Activated CD4-positive, alpha-beta memory T cell treated with anti-CD3 and anti-CD28 coated beads for 36 hours (primary cell): ENCODE measurements at regions of chr6 and their contacts with region 1.

Region 1: GRCh38 chr6:28161410-28162079 is 19.9 kb downstream of the ZKSCAN8 start:
- DNase-seq: peak; percentile 89
- H3K4me3 Mint-ChIP-seq: peak overlapping the region; percentile 61
- H3K27ac Mint-ChIP-seq: peak overlapping the region; percentile 42
- H3K4me1 Mint-ChIP-seq: peaks cover 14% of the 10 kb centered on the region
- H3K27me3 Mint-ChIP-seq: no peaks in the 10 kb centered on the region

Region 2: GRCh38 chr6:27518881-27519795 is 642.4 kb before region 1 on chr6:
- CTCF ChIA-PET with region 1: no interaction called
- POLR2A ChIA-PET with region 1: no interaction called
- intact Hi-C with region 1: no loop called
- DNase-seq: peak; percentile 70
- H3K4me3 Mint-ChIP-seq: peak overlapping the region; percentile 79
- H3K27ac Mint-ChIP-seq: peak overlapping the region; percentile 77
- H3K4me1 Mint-ChIP-seq: peaks cover 19% of the 10 kb centered on the region
- H3K27me3 Mint-ChIP-seq: peaks cover 17% of the 10 kb centered on the region

Region 3: DNA sequence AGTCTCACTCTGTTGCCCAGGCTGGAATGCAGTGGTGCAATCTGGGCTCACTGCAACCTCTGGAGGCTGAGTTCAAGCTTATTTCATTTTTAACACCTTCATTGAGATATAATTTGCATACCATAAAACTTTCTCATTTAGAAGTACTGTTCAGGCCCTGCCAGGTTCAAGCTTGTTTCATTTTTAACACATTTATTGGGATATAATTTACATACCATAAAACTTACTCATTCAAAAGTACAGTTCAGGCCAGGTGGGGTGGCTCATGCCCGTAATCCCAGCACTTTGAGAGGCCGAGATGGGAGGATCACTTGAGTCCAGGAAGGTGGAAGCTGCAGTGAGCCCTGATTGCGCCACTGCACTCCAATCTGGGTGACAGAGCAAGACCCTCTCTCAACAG is 199.0 kb before region 1 on chr6:
- CTCF ChIA-PET with region 1: no interaction called
- POLR2A ChIA-PET with region 1: no interaction called
- intact Hi-C with region 1: no loop called
- DNase-seq: no peak
- H3K4me3 Mint-ChIP-seq: no peak overlapping the region
- H3K27ac Mint-ChIP-seq: no peak overlapping the region
- H3K4me1 Mint-ChIP-seq: no peaks in the 10 kb centered on the region
- H3K27me3 Mint-ChIP-seq: peaks cover 36% of the 10 kb centered on the region

Region 4: DNA sequence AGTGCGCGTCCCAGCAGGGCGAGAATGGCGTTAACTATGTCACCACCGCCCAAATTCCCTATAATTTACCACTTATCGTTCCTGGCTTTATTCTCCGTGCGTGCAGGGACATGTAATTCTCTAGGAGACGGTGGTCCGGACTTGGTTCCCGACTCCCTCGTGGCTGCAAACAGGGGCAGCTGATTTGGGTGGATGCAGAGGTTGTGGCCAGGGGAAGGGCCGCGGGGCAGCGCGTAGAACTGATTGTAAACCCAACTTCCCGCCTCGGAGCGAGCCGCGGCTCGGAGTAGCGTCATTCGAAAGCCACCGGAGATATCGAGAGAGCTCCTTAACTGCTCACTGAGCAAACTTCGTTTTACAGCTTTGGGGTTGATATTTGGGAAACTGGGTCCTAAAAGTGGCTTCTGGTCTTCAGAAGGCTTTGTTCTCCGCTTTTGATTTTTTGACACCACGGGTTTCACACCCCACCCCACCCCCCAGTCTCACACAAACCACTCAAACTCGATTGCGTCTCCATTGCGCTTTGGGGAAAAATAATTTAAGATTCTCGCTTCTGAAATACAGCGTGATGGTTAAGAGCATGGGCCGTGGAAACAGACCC is 46.1 kb after region 1 on chr6:
- CTCF ChIA-PET with region 1: no interaction called
- POLR2A ChIA-PET with region 1: no interaction called
- intact Hi-C with region 1: loop called (anchors 5 kb)
- DNase-seq: peak; percentile 43
- H3K4me3 Mint-ChIP-seq: peak overlapping the region; percentile 70
- H3K27ac Mint-ChIP-seq: no peak overlapping the region
- H3K4me1 Mint-ChIP-seq: peaks cover 19% of the 10 kb centered on the region
- H3K27me3 Mint-ChIP-seq: peaks cover 66% of the 10 kb centered on the region